Thyroid gland (tissue), 4 donors: ENCODE measurements at regions of chr6 and their contacts with region 1.

Region 1: GRCh38 chr6:32933636-32934085 is 7.2 kb downstream of the HLA-DMB start:
- DNase-seq: peak; percentile 78 to 81
- H3K4me3 ChIP-seq: no peak overlapping the region
- H3K27ac ChIP-seq: peak overlapping the region in 2 of 3 donors; percentile 6 to 72
- H3K4me1 ChIP-seq: peaks cover 27 to 37% of the 10 kb centered on the region in 2 donors
- H3K27me3 ChIP-seq: no peaks in the 10 kb centered on the region
- CTCF ChIP-seq: peak; percentile 56 to 82 (median 73)
- POLR2A ChIP-seq: no peak

Region 2: GRCh38 chr6:32894080-32895005 is 39.3 kb before region 1 on chr6:
- intact Hi-C with region 1: loop called (anchors 5 kb)
- DNase-seq: peak; percentile 93 to 95
- H3K4me3 ChIP-seq: peak overlapping the region; percentile 28 to 72 (median 52)
- H3K27ac ChIP-seq: peak overlapping the region; percentile 90 to 96 (median 91)
- H3K4me1 ChIP-seq: peaks cover 14 to 17% of the 10 kb centered on the region in 2 donors
- H3K27me3 ChIP-seq: no peaks in the 10 kb centered on the region
- CTCF ChIP-seq: peak in 1 of 6 experiments; percentile 11
- POLR2A ChIP-seq: peak; percentile 47 to 91

Region 3: GRCh38 chr6:32984605-32985389 is 51.1 kb after region 1 on chr6:
- intact Hi-C with region 1: loop called (anchors 5 kb)
- DNase-seq: peak; percentile 96 to 97
- H3K4me3 ChIP-seq: no peak overlapping the region
- H3K27ac ChIP-seq: no peak overlapping the region
- H3K4me1 ChIP-seq: peaks cover 0 to 6% of the 10 kb centered on the region in 2 donors
- H3K27me3 ChIP-seq: no peaks in the 10 kb centered on the region
- CTCF ChIP-seq: peak; percentile 76 to 92 (median 89)
- POLR2A ChIP-seq: no peak

Region 4: GRCh38 chr6:34560366-34561226 is 1626.9 kb after region 1 on chr6:
- intact Hi-C with region 1: no loop called
- DNase-seq: no peak
- H3K4me3 ChIP-seq: no peak overlapping the region
- H3K27ac ChIP-seq: no peak overlapping the region
- H3K4me1 ChIP-seq: no peaks in the 10 kb centered on the region
- H3K27me3 ChIP-seq: no peaks in the 10 kb centered on the region
- CTCF ChIP-seq: peak in 1 of 6 experiments; percentile 4
- POLR2A ChIP-seq: no peak